Left lung (tissue), 14 donors: ENCODE measurements at regions of chr7 and their contacts with region 1.

Region 1: GRCh38 chr7:95686109-95686508 is 86.2 kb upstream of the DYNC1I1 start:
- DNase-seq: peak in 3 of 4 donors; percentile 35 to 58 (median 41)
- ATAC-seq: peak; percentile 76
- H3K4me3 ChIP-seq: no peak overlapping the region
- H3K27ac ChIP-seq: no peak overlapping the region
- H3K4me1 ChIP-seq: peaks cover 0 to 10% of the 10 kb centered on the region in 2 donors
- H3K27me3 ChIP-seq: no peaks in the 10 kb centered on the region
- CTCF ChIP-seq: peak in 1 of 2 donors; percentile 36

Region 2: DNA sequence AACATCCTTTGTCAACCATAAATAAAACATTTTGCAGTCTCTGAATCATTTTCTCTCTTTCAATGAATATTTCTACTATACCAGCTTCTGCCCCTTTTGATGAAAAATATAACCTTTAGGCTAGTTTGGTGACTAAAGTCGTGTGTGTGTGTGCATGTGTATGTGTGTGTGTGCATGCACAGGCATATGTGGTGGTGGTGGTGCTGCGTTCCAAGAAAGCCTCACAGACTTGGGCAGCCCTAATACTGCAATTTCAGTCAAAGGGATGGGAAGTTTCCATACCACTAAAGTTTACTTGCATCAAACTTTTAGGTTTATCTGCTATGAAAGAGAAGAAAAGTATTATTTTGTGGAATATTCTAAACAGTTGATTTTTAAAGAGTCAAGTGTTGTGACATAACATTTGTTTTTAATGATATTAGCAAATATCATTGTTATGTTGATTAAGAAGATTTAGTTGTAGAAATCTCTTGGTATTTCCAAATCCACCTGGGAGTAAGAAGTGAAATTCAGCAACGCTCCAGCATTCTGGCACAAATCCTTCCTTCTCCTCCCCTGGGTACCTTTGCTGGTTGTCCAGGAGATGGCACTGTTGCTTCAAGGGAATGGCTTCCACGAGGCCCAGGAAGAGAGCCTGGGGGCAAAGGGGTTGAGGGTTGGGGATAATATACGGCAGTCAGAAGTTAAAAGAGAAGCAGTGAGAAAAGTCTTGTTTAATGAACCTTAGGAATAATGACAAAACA is 158.9 kb before region 1 on chr7:
- intact Hi-C with region 1: loop called (anchors 5 to 10 kb)
- DNase-seq: peak in 2 of 4 donors; percentile 37 to 72
- ATAC-seq: peak; percentile 92
- H3K4me3 ChIP-seq: no peak overlapping the region
- H3K27ac ChIP-seq: no peak overlapping the region
- H3K4me1 ChIP-seq: peaks cover 0 to 4% of the 10 kb centered on the region in 2 donors
- H3K27me3 ChIP-seq: no peaks in the 10 kb centered on the region
- CTCF ChIP-seq: peak; percentile 77 to 83

Region 3: GRCh38 chr7:95544171-95544570 is 141.9 kb before region 1 on chr7:
- intact Hi-C with region 1: loop called (anchors 5 to 10 kb)
- DNase-seq: no peak
- ATAC-seq: no peak
- H3K4me3 ChIP-seq: no peak overlapping the region
- H3K27ac ChIP-seq: no peak overlapping the region
- H3K4me1 ChIP-seq: peaks cover 9 to 45% of the 10 kb centered on the region in 2 donors
- H3K27me3 ChIP-seq: no peaks in the 10 kb centered on the region
- CTCF ChIP-seq: no peak

Region 4: DNA sequence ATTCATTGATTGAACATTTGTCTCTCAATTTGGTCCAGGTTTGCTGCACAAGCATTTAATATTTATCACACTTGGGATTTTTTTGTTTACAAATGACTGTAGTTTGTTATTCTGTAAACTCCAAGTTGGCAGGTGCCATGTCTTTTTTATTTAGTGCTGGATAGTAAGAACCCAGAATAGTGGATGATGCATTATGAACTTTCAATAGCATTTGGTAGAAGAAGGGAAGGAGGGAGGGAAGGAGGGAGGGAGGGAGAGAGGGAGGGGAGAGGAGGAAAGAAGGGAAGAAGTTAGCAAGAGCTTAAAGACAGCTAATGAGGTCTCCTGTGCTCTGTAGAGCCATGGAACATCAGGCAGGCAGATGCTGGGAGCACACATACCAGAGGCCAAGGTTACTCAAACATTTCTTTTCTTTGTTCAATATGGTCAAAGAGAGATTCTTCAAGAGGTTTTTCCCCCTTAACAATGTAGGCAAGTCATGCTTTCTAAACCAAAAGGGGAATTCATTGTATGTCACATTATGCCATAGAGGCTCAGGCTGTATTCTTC is 64.0 kb before region 1 on chr7:
- intact Hi-C with region 1: no loop called
- DNase-seq: no peak
- ATAC-seq: no peak
- H3K4me3 ChIP-seq: no peak overlapping the region
- H3K27ac ChIP-seq: no peak overlapping the region
- H3K4me1 ChIP-seq: peaks cover 0 to 7% of the 10 kb centered on the region in 2 donors
- H3K27me3 ChIP-seq: no peaks in the 10 kb centered on the region
- CTCF ChIP-seq: no peak